ENCODE measurements at regions of chr6 and their contacts with region 1.

Region 1: DNA sequence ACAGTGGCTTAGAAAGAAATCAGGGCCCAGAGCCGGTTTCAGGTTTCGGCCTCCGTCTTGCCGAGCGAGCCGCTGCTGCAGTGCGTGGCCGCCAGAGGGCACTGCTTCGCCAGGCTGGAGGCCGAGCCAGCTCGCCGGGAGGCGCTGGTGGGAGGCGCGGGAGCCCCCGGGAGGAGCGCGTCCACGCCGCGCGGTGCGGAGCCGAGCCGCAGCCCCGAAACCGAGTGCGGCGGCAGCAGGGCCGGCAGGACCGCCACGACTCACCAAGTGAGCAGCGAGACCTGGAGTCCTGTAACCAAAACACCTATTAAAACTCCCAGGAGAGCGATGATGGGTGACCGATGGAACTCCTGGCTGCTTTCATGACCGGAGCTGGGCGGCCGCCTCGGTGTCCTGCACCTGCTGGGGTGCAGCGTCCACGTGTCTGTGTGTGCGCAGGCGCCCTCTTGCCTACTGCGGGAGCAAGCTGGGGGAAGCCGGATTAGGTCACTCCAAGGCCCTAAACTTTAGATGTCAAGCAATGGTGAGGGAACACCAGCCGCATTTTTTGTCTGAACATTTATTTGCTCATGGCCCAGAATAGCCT is 186.9 kb upstream of the UST start:
- DNase-seq: peak; percentile 83
- ATAC-seq: peak; percentile 87
- H3K4me3 Mint-ChIP-seq: no peak overlapping the region
- H3K27ac Mint-ChIP-seq: no peak overlapping the region
- H3K4me1 Mint-ChIP-seq: peaks cover 7% of the 10 kb centered on the region
- H3K27me3 Mint-ChIP-seq: peaks cover 20% of the 10 kb centered on the region

Region 2: GRCh38 chr6:148570451-148570850 is 10.5 kb after region 1 on chr6:
- CTCF ChIA-PET with region 1: interaction called, 11 read pairs
- POLR2A ChIA-PET with region 1: no interaction called
- intact Hi-C with region 1: no loop called
- DNase-seq: no peak
- ATAC-seq: no peak
- H3K4me3 Mint-ChIP-seq: no peak overlapping the region
- H3K27ac Mint-ChIP-seq: no peak overlapping the region
- H3K4me1 Mint-ChIP-seq: peaks cover 5% of the 10 kb centered on the region
- H3K27me3 Mint-ChIP-seq: peaks cover 22% of the 10 kb centered on the region

Region 3: DNA sequence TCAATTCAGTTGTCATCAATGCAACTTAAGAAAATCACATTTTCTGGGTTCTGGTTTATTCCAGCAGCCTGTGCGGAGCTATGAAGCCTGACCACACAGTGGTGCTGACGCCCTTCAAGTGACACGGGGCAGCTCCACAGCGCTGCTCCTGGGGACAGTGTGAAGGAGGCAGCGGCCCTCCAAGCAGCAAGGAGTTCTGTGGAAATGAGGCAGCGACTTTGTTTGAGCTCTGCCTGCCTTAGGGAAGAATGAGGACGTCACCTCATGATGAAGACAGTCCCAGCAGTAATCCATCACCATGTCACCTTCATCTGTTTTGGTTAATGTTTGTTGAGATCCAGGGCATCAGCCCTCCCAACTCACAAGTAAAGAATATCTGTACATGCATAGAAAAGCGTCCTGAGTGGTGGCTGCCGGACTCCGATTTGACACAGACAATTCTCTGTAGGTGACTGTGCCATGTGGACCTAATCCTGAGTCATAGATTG is 18.3 kb after region 1 on chr6:
- CTCF ChIA-PET with region 1: interaction called, 10 read pairs
- POLR2A ChIA-PET with region 1: no interaction called
- intact Hi-C with region 1: no loop called
- DNase-seq: peak; percentile 74
- ATAC-seq: peak; percentile 99
- H3K4me3 Mint-ChIP-seq: no peak overlapping the region
- H3K27ac Mint-ChIP-seq: no peak overlapping the region
- H3K4me1 Mint-ChIP-seq: peaks cover 5% of the 10 kb centered on the region
- H3K27me3 Mint-ChIP-seq: peaks cover 36% of the 10 kb centered on the region

Region 4: GRCh38 chr6:148608199-148608951 is 48.4 kb after region 1 on chr6:
- CTCF ChIA-PET with region 1: no interaction called
- POLR2A ChIA-PET with region 1: no interaction called
- intact Hi-C with region 1: loop called in 1 of 2 experiments (anchors 1 kb)
- DNase-seq: no peak
- ATAC-seq: no peak
- H3K4me3 Mint-ChIP-seq: no peak overlapping the region
- H3K27ac Mint-ChIP-seq: no peak overlapping the region
- H3K4me1 Mint-ChIP-seq: no peaks in the 10 kb centered on the region
- H3K27me3 Mint-ChIP-seq: peaks cover 8% of the 10 kb centered on the region